Activated CD8-positive, alpha-beta T cell treated with anti-CD3 and anti-CD28 coated beads, Interleukin-2, amount 10 ng/mL, durations not matched to agents 7 days and 5 days (primary cell): ENCODE measurements at regions of chr11 and their contacts with region 1.

Region 1: GRCh38 chr11:120172054-120172911 is 34.4 kb upstream of the TRIM29 start:
- DNase-seq: peak; percentile 70
- ATAC-seq: peak; percentile 59
- H3K4me3 Mint-ChIP-seq: no peak overlapping the region
- H3K27ac Mint-ChIP-seq: no peak overlapping the region
- H3K4me1 Mint-ChIP-seq: no peaks in the 10 kb centered on the region
- H3K27me3 Mint-ChIP-seq: peaks cover 56% of the 10 kb centered on the region

Region 2: GRCh38 chr11:120153221-120153620 is 19.1 kb before region 1 on chr11:
- CTCF ChIA-PET with region 1: interaction called, 10 read pairs
- POLR2A ChIA-PET with region 1: no interaction called
- DNase-seq: no peak
- ATAC-seq: no peak
- H3K4me3 Mint-ChIP-seq: no peak overlapping the region
- H3K27ac Mint-ChIP-seq: no peak overlapping the region
- H3K4me1 Mint-ChIP-seq: no peaks in the 10 kb centered on the region
- H3K27me3 Mint-ChIP-seq: peaks cover 40% of the 10 kb centered on the region

Region 3: DNA sequence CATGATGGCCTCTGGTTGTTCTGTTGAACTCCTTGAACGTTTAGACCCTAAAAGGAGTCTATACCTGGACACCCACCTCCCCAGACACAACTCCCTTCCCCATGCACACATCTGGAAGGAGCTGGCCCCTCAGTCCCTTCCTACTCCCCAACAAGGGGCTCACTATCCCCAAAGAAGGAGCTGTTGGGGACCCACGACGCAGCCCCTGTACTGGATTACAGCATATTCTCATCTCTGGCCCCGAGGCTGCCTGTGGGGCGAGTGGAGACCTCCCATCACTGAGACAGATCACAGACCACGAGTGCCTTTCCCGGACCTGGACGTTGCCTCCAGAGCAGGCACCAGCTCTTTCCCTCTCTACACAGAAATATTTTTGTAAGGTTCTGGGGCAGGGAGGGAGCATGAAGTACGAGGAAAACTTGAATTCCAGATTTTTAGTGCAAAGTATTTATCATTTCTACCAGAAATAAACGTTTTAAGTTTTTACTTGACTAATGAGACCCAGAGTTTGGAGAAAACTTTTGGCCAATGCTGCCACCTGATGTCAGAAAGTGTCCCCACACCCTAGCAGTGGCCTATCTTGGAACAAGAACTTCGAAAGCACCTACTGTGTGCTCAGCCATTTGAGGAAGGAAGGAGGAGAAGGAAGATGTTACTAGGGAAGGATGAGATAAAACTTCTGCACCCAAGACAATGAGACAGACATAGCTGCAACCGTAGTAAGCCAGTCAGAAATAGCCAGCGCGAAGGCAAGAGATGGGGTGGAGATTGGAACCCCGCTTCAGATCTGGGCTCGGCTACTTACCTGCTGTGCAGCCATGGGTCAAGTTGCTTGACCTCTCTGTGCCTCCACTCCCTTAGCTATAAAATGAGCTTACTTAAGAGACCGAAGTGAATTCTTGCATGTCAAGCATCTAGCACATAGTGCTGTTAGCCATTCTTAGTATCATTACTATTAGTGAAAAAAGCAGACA is 57.5 kb after region 1 on chr11:
- CTCF ChIA-PET with region 1: interaction called, 63 read pairs
- POLR2A ChIA-PET with region 1: no interaction called
- DNase-seq: peak; percentile 38
- ATAC-seq: no peak
- H3K4me3 Mint-ChIP-seq: no peak overlapping the region
- H3K27ac Mint-ChIP-seq: no peak overlapping the region
- H3K4me1 Mint-ChIP-seq: peaks cover 11% of the 10 kb centered on the region
- H3K27me3 Mint-ChIP-seq: peaks cover 11% of the 10 kb centered on the region

Region 4: GRCh38 chr11:120235024-120235861 is 63.0 kb after region 1 on chr11:
- CTCF ChIA-PET with region 1: interaction called, 63 read pairs
- POLR2A ChIA-PET with region 1: no interaction called
- DNase-seq: peak; percentile 78
- ATAC-seq: peak; percentile 82
- H3K4me3 Mint-ChIP-seq: no peak overlapping the region
- H3K27ac Mint-ChIP-seq: no peak overlapping the region
- H3K4me1 Mint-ChIP-seq: peaks cover 5% of the 10 kb centered on the region
- H3K27me3 Mint-ChIP-seq: peaks cover 53% of the 10 kb centered on the region

Region 5: DNA sequence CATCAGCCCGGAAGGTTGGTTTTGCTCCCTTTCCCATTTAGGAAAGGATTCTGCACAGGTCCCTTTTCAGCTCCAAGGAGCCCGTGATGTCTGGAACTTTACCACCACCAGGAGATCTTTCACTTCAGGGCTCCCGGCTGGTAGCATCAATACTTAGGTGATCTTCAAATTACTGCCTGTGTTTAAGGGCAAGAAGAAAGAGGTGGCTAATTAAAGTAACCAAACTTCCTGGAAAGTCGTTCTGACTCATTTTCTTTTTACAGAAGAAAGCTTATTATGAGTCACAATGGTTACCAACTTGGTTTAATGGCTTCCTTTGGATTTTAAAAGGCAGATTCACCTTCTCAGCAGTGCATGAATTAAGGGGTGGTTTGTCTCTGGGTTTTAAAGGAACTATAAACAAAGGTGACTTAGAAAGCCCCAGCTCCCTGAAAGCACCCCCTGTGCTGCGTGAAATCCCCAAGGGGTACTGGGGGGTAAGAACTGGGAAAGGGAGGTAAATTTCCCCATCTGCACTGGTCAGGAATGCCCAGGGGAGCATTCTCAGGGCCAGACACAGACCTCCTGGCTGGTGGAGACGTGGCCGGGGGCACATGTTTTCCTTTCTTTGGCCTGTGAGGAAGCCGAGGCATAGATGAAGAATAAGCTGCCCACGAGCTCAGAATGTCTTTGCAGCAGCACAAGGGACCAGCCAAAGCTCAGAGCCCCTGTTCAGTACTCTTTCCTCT is 76.4 kb after region 1 on chr11:
- CTCF ChIA-PET with region 1: interaction called, 16 read pairs
- POLR2A ChIA-PET with region 1: no interaction called
- DNase-seq: peak; percentile 32
- ATAC-seq: peak; percentile 92
- H3K4me3 Mint-ChIP-seq: peak overlapping the region; percentile 70
- H3K27ac Mint-ChIP-seq: peak overlapping the region; percentile 78
- H3K4me1 Mint-ChIP-seq: peaks cover 63% of the 10 kb centered on the region
- H3K27me3 Mint-ChIP-seq: peaks cover 54% of the 10 kb centered on the region